ENCODE measurements at regions of chr18 and their contacts with region 1.

Region 1: GRCh38 chr18:37754141-37754540 is 188.5 kb upstream of the CELF4 start:
- DNase-seq: no peak
- H3K4me3 ChIP-seq: no peak overlapping the region
- H3K27ac ChIP-seq: no peak overlapping the region
- H3K4me1 ChIP-seq: no peaks in the 10 kb centered on the region
- H3K27me3 ChIP-seq: no peaks in the 10 kb centered on the region
- CTCF ChIP-seq: no peak
- POLR2A ChIP-seq: no peak

Region 2: GRCh38 chr18:38421872-38422615 is 667.9 kb after region 1 on chr18:
- intact Hi-C with region 1: loop called (anchors 5 kb)
- DNase-seq: no peak
- H3K4me3 ChIP-seq: no peak overlapping the region
- H3K27ac ChIP-seq: no peak overlapping the region
- H3K4me1 ChIP-seq: no peaks in the 10 kb centered on the region
- H3K27me3 ChIP-seq: no peaks in the 10 kb centered on the region
- CTCF ChIP-seq: no peak
- POLR2A ChIP-seq: no peak